ENCODE measurements at regions of chr3 and their contacts with region 1.

Region 1: DNA sequence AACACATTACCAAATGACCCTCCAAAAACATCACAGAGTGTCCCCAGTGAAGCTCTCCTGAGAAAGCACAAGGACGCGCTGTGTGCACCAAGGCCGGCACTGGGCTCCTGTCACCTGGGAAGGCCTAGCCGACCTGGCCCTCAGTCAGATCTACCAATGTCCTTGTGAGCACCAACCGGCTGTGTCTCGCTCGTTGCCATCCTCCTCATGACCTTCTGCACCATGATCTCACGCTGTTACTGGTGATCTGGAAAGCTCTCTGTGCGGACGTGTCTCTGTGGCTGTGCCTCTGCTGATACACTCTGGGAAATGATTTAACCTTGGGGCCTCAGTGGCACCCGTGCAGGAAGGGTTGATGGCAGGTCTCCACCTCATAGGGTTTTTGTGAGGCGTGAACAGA is 24.2 kb downstream of the ZXDC start:
- DNase-seq: no peak
- H3K4me3 ChIP-seq: no peak overlapping the region
- H3K27ac ChIP-seq: no peak overlapping the region
- H3K4me1 ChIP-seq: no peaks in the 10 kb centered on the region
- H3K27me3 ChIP-seq: no peaks in the 10 kb centered on the region
- CTCF ChIP-seq: no peak

Region 2: DNA sequence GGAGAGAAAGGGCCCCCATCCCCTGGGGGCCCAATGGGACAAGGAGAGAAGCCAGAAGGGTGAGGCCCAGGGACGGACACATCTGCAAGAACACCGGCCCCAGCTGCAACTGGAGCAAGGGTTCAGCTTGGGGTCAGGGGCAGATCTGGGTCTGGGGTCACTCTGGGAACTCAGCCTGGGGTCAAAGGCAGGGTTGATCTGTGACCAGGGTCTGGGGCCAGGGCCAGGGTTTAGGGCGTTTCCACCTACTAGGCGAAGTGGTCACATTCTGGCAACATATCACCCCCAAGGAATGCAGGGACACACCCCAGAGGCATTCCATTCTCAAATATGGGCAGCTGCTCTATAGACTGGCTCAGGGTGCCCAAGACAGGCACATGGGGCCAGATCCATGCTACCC is 57.0 kb after region 1 on chr3:
- CTCF ChIA-PET with region 1: no interaction called
- dilution Hi-C with region 1: loop called (anchors 5 kb)
- in situ Hi-C with region 1: no loop called
- intact Hi-C with region 1: no loop called
- DNase-seq: no peak
- H3K4me3 ChIP-seq: no peak overlapping the region
- H3K27ac ChIP-seq: no peak overlapping the region
- H3K4me1 ChIP-seq: peaks cover 18% of the 10 kb centered on the region
- H3K27me3 ChIP-seq: no peaks in the 10 kb centered on the region
- CTCF ChIP-seq: no peak